IMR-90 (cell line): ENCODE measurements at regions of chr21 and their contacts with region 1.

Region 1: DNA sequence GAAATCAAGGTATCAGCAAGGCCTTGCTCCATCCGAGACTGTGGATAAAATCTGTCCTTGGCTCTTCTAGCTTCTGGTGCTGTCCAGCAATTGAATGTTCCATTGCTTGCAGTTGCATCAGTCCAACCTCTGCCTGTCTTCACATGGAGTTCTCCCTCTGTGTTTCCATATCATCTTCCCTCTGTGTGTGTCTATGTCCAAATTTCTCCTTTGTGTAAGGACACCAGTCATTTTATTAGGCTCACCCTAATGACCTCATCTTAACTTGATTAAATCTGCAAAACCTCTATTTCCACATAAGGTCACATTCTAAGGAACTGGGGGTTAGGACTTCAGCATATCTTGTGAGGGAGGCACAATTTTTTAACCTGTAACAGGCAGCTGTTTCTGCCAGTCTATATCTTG is 84.2 kb downstream of the ERG start:
- DNase-seq: no peak
- ATAC-seq: no peak
- H3K4me3 ChIP-seq: no peak overlapping the region
- H3K27ac ChIP-seq: no peak overlapping the region
- H3K4me1 ChIP-seq: no peaks in the 10 kb centered on the region
- H3K27me3 ChIP-seq: peaks cover 9% of the 10 kb centered on the region
- CTCF ChIP-seq: no peak
- POLR2A ChIP-seq: no peak
- RAD21 ChIP-seq: no peak

Region 2: GRCh38 chr21:38359090-38359489 is 55.0 kb before region 1 on chr21:
- CTCF ChIA-PET with region 1: no interaction called
- POLR2A ChIA-PET with region 1: no interaction called
- dilution Hi-C with region 1: no loop called
- in situ Hi-C with region 1: no loop called
- intact Hi-C with region 1: no loop called
- DNase-seq: no peak
- ATAC-seq: no peak
- H3K4me3 ChIP-seq: no peak overlapping the region
- H3K27ac ChIP-seq: no peak overlapping the region
- H3K4me1 ChIP-seq: no peaks in the 10 kb centered on the region
- H3K27me3 ChIP-seq: peaks cover 23% of the 10 kb centered on the region
- CTCF ChIP-seq: no peak
- POLR2A ChIP-seq: no peak
- RAD21 ChIP-seq: no peak

Region 3: GRCh38 chr21:38805328-38806152 is 391.5 kb after region 1 on chr21 and contains the start of gene ETS2:
- CTCF ChIA-PET with region 1: no interaction called
- POLR2A ChIA-PET with region 1: no interaction called
- dilution Hi-C with region 1: no loop called
- in situ Hi-C with region 1: no loop called
- intact Hi-C with region 1: no loop called
- DNase-seq: peak; percentile 92
- ATAC-seq: peak; percentile 85
- H3K4me3 ChIP-seq: peak within 1 kb of the TSS; percentile 95
- H3K27ac ChIP-seq: peak within 1 kb of the TSS; percentile 91
- H3K4me1 ChIP-seq: peaks cover 28% of the 10 kb centered on the region
- H3K27me3 ChIP-seq: no peaks in the 10 kb centered on the region
- CTCF ChIP-seq: no peak
- POLR2A ChIP-seq: peak; percentile 98
- RAD21 ChIP-seq: no peak; the same call in none of the 2 replicates
- total RNA-seq, gene ETS2: 20.6 and 21.7 TPM in 2 replicates

Region 4: GRCh38 chr21:39555911-39556590 is 1142.0 kb after region 1 on chr21:
- CTCF ChIA-PET with region 1: no interaction called
- POLR2A ChIA-PET with region 1: no interaction called
- dilution Hi-C with region 1: no loop called
- in situ Hi-C with region 1: no loop called
- intact Hi-C with region 1: loop called (anchors 10 kb)
- DNase-seq: no peak
- ATAC-seq: no peak
- H3K4me3 ChIP-seq: no peak overlapping the region
- H3K27ac ChIP-seq: no peak overlapping the region
- H3K4me1 ChIP-seq: no peaks in the 10 kb centered on the region
- H3K27me3 ChIP-seq: no peaks in the 10 kb centered on the region
- CTCF ChIP-seq: no peak
- POLR2A ChIP-seq: no peak
- RAD21 ChIP-seq: no peak